A549 (cell line): ENCODE measurements at regions of chr10 and their contacts with region 1.

Region 1: GRCh38 chr10:50624866-50625692 is 1.3 kb upstream of the SGMS1 start:
- DNase-seq: peak; percentile 83 to 86
- ATAC-seq: peak; percentile 71 to 76
- H3K4me3 ChIP-seq: peak overlapping the region; percentile 89
- H3K27ac ChIP-seq: peak overlapping the region; percentile 96 to 98
- H3K4me1 ChIP-seq: peaks cover 18% of the 10 kb centered on the region
- CTCF ChIP-seq: peak; percentile 39
- EP300 ChIP-seq: no peak
- POLR2A ChIP-seq: peak; percentile 55
- RAD21 ChIP-seq: peak; percentile 36 to 44; a peak in 1 of 5 replicates

Region 2: DNA sequence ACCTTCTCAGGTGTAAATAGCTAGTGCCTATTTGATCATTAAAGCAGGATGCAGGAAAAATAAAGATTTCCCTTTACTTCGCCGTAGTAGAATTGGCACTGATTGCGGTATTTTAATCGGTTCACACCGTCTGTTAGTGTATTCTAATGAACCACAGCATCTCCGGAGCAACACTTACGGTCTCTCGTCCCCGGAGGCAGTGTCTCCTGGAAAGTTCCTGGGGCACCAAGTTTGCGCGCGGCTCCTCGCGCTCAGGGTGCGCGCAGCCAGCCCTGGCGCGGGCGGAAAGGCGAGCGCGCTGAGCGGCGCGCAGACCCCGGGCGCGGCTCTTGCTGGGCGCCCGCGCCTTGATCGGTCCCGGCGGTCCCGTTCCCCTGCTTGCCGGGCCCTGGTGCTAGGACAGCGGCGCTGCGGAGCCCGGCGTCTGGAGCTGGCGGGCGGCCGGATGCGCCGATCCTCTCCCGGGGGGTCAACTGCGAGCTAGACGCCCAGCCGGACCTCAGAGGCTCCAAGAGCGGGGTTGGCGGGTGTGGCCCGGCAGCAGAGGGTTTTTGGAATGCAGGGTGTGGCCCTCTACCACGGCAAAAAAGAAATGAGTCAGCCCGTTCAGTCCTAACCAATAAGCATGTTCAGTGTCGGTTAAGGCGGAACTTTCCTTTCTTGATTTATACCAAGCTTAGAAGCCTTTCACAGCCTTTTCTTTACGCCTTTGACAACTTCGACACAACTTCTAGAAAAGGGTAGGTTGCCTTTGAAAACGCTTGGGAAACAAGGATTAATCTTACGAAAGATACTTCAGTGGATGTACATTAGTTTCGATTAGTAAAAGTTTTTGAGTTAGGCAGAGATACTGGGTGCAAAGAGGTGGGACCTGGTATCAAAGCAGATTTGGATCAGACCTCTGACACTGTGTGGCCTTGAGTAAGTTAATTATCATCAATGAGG is 206.9 kb before region 1 on chr10:
- CTCF ChIA-PET with region 1: interaction called, 7 read pairs
- POLR2A ChIA-PET with region 1: interaction called, 24 read pairs
- DNase-seq: peak; percentile 86 to 92
- ATAC-seq: peak; percentile 94 to 97
- H3K4me3 ChIP-seq: peak overlapping the region; percentile 58
- H3K27ac ChIP-seq: peak overlapping the region; percentile 86 to 96
- H3K4me1 ChIP-seq: peaks cover 40% of the 10 kb centered on the region
- CTCF ChIP-seq: 0 out of 3 replicates have a peak, but pooled peaks have one; percentile 11
- EP300 ChIP-seq: no peak
- POLR2A ChIP-seq: no peak
- RAD21 ChIP-seq: peak in 1 of 2 experiments; percentile 41; a peak in 1 of 5 replicates

Region 3: DNA sequence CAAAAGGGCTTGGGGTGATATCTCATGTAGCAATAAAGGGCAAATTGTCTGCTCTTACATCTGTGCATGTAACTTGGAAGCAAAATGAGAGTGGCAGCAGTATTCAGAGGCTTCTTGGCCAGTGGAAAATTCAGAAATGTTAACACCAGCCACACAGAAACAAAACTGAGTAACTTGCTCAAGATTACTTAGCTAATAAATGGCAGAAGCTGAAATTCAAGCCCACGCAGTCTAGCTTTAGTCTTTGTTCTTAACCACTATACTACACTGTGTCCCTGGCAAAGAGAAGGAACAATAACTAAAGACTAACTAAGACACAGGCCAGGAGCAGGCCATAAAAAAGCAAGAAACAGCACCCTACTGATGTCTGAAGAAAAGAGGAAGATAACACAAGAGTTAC is 187.8 kb before region 1 on chr10:
- CTCF ChIA-PET with region 1: no interaction called
- POLR2A ChIA-PET with region 1: no interaction called
- DNase-seq: no peak
- ATAC-seq: no peak
- H3K4me3 ChIP-seq: no peak overlapping the region
- H3K27ac ChIP-seq: no peak overlapping the region
- H3K4me1 ChIP-seq: no peaks in the 10 kb centered on the region
- CTCF ChIP-seq: no peak
- EP300 ChIP-seq: no peak
- POLR2A ChIP-seq: no peak
- RAD21 ChIP-seq: no peak

Region 4: DNA sequence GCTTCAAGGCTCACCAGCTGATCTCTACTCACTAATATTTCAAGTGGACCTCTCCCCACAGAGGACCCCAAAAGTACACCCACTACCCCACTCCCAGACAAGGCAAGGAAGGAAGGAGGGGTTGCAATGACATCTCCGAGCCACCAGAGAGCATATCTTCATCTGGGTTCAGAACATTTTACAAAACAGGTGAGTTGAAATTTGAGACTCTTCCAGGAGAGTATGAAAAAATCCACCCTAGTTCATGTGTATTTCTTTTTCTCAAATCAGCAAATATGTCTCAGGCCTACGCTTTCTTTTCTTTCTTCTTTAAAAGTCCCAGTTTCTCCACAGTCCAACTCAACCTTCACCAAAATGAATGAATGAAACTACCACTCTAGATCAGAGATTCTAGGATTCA is 63.3 kb before region 1 on chr10:
- CTCF ChIA-PET with region 1: interaction called, 16 read pairs
- POLR2A ChIA-PET with region 1: interaction called, 7 read pairs
- DNase-seq: peak in 1 of 2 experiments; percentile 14
- ATAC-seq: peak; percentile 56 to 68; a peak in 5 of 6 replicates
- H3K4me3 ChIP-seq: no peak overlapping the region
- H3K27ac ChIP-seq: no peak overlapping the region
- H3K4me1 ChIP-seq: peaks cover 6% of the 10 kb centered on the region; the same call in 1 of the 3 replicates
- CTCF ChIP-seq: peak; percentile 55
- EP300 ChIP-seq: no peak
- POLR2A ChIP-seq: no peak
- RAD21 ChIP-seq: peak; percentile 49 to 64

Region 5: GRCh38 chr10:50590935-50591334 is 34.1 kb before region 1 on chr10:
- CTCF ChIA-PET with region 1: interaction called, 4 read pairs
- POLR2A ChIA-PET with region 1: interaction called, 10 read pairs
- DNase-seq: no peak
- ATAC-seq: no peak
- H3K4me3 ChIP-seq: no peak overlapping the region
- H3K27ac ChIP-seq: no peak overlapping the region
- H3K4me1 ChIP-seq: peaks cover 22% of the 10 kb centered on the region
- CTCF ChIP-seq: no peak
- EP300 ChIP-seq: no peak
- POLR2A ChIP-seq: no peak
- RAD21 ChIP-seq: no peak

Region 6: DNA sequence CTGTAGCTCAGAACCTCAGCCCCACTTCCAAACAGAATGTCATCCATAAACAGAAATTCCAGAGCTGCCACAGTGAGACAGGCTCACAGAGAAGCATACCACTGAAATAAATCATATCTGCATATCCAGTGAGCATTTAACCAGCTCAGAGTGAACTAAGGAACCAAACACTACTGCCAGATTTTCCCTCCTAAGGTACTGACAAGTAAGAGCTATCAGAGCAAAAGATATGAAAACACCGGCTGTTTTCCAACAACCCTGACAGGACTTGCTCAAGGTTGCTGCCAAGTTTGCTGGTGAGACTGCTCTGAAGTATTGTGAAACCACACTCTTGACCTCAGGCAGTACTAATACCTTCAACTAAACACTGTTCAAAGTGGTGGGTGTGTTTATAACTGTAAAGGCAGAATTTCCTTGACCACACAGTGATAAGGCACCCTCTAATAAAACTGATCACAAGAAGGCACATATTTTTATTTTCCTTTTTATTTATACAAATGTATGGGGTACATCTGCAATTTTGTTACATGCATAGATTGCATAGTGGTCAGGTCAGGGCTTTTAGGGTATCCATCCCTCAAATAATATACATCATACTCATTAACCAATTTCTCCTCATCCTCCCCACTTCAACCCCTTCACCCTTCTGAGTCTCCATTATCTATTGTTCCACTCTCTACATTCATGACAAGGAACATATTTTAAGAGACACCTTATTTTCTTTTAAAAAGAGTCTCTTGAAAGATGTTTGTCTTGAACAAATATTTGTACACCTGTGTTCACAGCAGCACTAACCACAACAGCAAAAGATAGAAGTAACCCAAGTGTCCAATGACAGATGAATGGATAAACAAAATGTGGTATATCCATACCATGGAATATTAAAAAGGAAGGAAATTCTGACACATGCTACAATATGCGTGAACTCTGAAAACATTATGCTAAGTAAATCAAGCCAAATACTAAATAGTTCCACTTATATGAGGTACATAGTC is 19.5 kb before region 1 on chr10:
- CTCF ChIA-PET with region 1: interaction called, 23 read pairs
- POLR2A ChIA-PET with region 1: interaction called, 15 read pairs
- DNase-seq: peak; percentile 24 to 71
- ATAC-seq: peak; percentile 88 to 93
- H3K4me3 ChIP-seq: 0 out of 3 replicates have a peak overlapping the region, but pooled peaks have one; percentile 2
- H3K27ac ChIP-seq: peak overlapping the region; percentile 20 to 75; a peak in 5 of 6 replicates
- H3K4me1 ChIP-seq: peaks cover 78% of the 10 kb centered on the region
- CTCF ChIP-seq: no peak
- EP300 ChIP-seq: no peak
- POLR2A ChIP-seq: no peak
- RAD21 ChIP-seq: no peak

Region 7: GRCh38 chr10:50614444-50615137 is 10.5 kb before region 1 on chr10:
- CTCF ChIA-PET with region 1: interaction called, 23 read pairs
- POLR2A ChIA-PET with region 1: interaction called, 5 read pairs
- DNase-seq: peak; percentile 22 to 46
- ATAC-seq: peak; percentile 72 to 88; a peak in 4 of 6 replicates
- H3K4me3 ChIP-seq: no peak overlapping the region
- H3K27ac ChIP-seq: no peak overlapping the region
- H3K4me1 ChIP-seq: no peaks in the 10 kb centered on the region
- CTCF ChIP-seq: no peak; the same call in 2 of the 3 replicates
- EP300 ChIP-seq: no peak
- POLR2A ChIP-seq: no peak
- RAD21 ChIP-seq: peak in 1 of 2 experiments; percentile 14; a peak in 1 of 5 replicates